Dendritic cell treated with granulocyte-macrophage colony-stimulating factor and Interleukin-4, amounts not matched to agents 40 ng/mL and 50 ng/mL, for 4 days (primary cell): ENCODE measurements at regions of chr12 and their contacts with region 1.

Region 1: DNA sequence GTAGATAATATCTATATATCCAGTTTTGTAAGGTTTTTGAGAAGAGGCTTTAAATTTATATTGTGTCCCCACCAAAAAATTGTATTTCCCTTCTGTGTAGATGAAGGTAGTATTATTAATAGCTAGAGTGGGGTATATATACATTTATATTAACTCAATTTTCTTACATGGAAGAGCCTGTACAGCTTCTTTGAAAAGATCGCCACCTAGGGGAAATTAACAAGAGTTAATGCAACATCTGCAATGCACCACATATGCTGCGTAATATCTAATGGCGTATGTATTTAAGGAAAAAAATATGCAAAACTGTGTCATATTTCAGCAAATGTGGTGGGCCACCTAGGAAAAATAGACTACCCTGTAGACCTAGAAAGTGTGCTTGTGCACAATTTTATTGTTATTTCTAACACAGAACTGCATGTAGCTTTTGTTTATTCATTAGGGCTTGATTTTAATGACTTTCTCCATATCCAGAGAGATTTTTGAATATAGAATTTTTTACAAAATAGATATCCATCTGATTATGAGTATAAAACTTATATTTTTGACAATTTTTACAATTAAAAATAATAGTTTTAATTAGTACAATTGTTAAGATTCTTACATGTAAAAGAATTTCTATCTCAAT is 14.0 kb downstream of the CCER1 start:
- H3K4me3 Mint-ChIP-seq: no peak overlapping the region
- H3K27ac Mint-ChIP-seq: no peak overlapping the region
- H3K4me1 Mint-ChIP-seq: no peaks in the 10 kb centered on the region
- H3K27me3 Mint-ChIP-seq: peaks cover 2% of the 10 kb centered on the region

Region 2: GRCh38 chr12:89019408-89020120 is 1921.4 kb before region 1 on chr12:
- intact Hi-C with region 1: loop called (anchors 10 kb)
- H3K4me3 Mint-ChIP-seq: no peak overlapping the region
- H3K27ac Mint-ChIP-seq: no peak overlapping the region
- H3K4me1 Mint-ChIP-seq: no peaks in the 10 kb centered on the region
- H3K27me3 Mint-ChIP-seq: peaks cover 2% of the 10 kb centered on the region

Region 3: DNA sequence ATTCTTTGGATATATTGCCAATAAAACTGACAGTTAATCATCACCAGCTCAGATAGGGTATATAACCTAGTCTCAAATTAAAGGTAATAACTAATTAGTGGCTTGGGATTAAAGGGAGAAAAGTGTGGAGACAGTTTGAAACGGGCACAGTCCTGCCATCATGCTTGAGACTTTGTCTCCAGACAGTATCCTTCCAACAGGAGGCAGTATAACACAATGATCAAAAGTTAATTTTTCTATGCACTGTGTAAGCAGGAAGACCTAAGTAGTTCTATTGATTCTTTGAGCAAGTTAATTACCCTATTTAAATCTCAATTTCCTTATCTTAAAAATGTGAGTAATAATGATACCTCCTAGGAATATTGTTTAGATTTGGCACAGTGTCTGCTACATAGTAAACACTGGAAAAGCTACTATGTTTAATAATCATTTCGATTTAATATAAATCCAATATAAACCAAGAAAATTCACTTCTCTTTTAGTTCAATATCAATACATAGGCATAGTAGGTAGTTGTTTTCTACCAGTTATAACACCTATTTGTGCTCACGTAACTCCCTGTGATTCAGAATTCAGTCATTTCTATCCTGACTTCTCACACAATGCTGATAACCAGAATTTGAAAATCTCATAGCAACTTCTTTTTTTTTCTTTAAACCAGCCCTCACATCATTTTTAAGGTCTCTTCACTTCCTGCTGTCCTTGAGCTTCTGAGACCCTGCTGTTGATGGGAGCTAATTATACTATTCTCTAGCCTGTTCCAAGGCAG is 1470.1 kb before region 1 on chr12:
- intact Hi-C with region 1: loop called (anchors 5 kb)
- H3K4me3 Mint-ChIP-seq: no peak overlapping the region
- H3K27ac Mint-ChIP-seq: no peak overlapping the region
- H3K4me1 Mint-ChIP-seq: peaks cover 20% of the 10 kb centered on the region
- H3K27me3 Mint-ChIP-seq: no peaks in the 10 kb centered on the region

Region 4: DNA sequence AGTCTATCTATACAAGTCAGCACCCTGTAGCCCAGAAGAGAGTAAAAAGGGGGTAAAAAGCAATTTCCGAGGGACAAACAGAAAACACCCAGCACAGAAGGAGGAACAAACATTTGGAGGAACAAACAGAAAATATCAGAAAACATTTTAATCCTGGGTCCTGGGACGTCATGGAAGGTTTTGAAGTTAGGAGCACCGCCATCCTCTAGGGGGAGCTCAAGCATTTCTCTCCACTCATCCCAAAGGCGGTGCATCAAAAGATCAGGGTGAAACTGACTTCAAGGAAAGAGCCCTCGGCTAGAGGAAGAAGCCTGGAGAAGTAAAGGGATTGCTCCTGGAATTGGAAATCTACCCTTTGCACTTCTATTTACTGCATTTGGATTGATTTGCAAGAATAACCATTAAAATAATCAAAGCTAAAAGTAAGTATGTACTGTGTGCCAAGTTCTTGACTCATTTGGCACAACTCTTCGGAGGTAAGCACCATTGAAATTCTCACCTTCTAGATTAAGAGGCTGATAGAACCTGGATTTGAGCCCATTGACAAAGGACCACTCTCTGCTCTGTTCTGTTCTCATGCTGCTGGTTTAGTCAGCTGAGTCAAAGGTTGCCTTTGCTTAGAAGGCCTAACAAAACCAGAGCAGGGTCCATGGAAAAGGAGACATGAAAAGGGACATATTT is 1397.9 kb before region 1 on chr12:
- intact Hi-C with region 1: loop called (anchors 2 kb)
- H3K4me3 Mint-ChIP-seq: no peak overlapping the region
- H3K27ac Mint-ChIP-seq: peak overlapping the region; percentile 4
- H3K4me1 Mint-ChIP-seq: peaks cover 30% of the 10 kb centered on the region
- H3K27me3 Mint-ChIP-seq: peaks cover 1% of the 10 kb centered on the region

Region 5: DNA sequence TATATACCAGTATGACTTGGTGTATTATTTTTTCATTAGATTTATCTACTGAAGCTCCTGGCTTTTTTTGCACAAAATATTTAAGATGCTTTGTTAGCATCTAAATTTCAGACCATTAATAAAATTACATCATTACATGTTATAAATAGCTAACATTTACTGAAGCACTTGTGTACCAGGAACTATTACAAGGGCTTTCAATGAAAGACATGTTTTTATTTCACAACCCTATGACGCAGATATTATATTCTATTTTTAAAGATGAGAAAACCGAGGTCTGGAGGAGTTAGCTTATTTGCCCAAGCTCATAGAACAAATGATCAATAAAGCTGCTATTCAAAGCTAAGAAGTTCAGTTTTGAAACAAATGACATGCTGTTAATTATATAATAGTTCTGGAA is 662.1 kb after region 1 on chr12:
- intact Hi-C with region 1: no loop called
- H3K4me3 Mint-ChIP-seq: no peak overlapping the region
- H3K27ac Mint-ChIP-seq: no peak overlapping the region
- H3K4me1 Mint-ChIP-seq: no peaks in the 10 kb centered on the region
- H3K27me3 Mint-ChIP-seq: no peaks in the 10 kb centered on the region